ENCODE measurements at regions of chr10 and their contacts with region 1.

Region 1: DNA sequence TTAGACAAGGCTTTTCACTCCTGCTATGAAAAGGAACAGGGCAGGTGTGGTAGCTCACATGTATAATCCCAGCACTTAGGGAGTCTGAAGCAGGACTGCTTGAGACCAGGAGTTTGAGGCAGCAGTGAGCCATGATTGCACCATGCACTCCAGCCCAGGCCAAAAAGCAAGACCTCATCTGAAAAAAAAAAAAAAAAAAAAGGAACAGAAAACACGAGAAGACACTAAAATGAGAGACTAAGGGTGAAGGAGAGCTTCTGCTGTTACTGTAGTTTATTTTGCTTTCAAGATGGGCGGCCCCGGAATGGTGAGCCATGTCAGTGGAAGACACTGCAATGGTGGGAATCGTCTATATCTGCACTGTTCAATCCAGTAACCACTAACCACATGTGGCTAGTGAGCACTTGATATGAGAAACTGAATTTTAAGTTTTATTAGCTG is 9.9 kb downstream of the PIP4K2A start:
- DNase-seq: no peak
- ATAC-seq: peak; percentile 39

Region 2: GRCh38 chr10:22410394-22410793 is 294.1 kb before region 1 on chr10:
- intact Hi-C with region 1: no loop called
- DNase-seq: no peak
- ATAC-seq: no peak

Region 3: DNA sequence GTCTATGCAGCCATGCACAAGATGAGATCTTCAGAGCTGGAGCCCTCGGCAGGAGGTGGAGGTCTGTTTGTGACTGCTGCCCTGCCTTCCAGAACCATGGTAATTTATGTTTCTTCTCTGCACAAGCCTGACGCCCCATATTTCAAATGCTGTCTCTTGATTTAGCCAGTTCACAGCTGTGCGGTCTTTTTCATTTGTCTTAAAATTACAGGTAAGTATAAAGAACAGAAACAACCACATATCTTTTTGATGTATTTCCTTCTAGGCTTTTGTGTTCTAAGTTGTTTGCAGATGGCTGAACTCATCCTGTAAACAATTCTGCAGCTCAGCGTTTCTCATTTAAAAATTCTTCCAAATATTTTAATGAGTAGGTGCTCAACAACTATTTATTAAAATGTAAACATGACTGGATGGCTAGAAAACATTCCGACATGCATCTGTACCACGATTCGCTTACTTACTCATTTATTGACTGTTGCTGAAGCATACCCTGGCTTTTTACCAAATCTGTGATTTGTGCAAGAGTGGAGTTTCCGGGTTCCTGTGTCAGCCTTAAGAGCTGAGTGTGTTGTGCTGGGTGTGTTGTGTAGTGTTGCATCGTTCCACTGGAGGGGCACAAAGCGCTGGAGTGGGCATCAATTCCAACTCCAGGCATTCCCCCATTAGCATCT is 49.0 kb before region 1 on chr10:
- intact Hi-C with region 1: no loop called
- DNase-seq: no peak
- ATAC-seq: no peak

Region 4: GRCh38 chr10:22736134-22736533 is 31.6 kb after region 1 on chr10:
- intact Hi-C with region 1: loop called (anchors 1 kb)
- DNase-seq: no peak
- ATAC-seq: no peak

Measured in sciatic nerve (tissue), 2 donors.